ENCODE measurements at regions of chr4 and their contacts with region 1.

Region 1: DNA sequence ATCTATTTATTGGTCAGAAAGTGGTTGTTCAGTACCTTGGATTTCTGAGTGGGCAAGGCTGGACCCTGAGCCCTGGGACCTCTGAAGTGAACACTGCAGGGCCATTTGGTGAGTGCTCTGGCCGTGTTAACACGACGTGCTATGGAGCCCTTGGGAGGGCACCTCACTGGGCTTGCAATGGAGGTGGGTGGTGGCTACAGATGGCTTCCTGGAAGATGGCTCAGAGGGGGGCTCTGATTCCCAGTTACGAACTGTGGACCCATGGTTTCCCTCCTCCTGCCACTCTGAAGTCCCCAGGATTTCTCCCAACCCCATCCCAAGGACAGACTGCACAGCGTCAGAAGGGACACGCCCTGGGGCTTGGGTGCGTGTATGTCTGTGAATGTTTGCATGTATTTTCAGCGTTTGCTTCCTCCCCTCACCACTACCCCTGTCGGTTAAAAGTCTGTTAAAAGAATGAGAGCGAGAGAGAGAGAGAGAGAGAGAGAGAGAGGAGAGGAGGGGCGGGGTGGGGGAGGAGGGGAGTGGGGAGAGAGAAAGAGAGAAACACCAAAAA is 3.7 kb upstream of the RHOH start:
- DNase-seq: peak; percentile 72
- H3K4me3 Mint-ChIP-seq: peak overlapping the region; percentile 93
- H3K27ac Mint-ChIP-seq: peak overlapping the region; percentile 96
- H3K4me1 Mint-ChIP-seq: peaks cover 75% of the 10 kb centered on the region
- H3K27me3 Mint-ChIP-seq: peaks cover 4% of the 10 kb centered on the region

Region 2: DNA sequence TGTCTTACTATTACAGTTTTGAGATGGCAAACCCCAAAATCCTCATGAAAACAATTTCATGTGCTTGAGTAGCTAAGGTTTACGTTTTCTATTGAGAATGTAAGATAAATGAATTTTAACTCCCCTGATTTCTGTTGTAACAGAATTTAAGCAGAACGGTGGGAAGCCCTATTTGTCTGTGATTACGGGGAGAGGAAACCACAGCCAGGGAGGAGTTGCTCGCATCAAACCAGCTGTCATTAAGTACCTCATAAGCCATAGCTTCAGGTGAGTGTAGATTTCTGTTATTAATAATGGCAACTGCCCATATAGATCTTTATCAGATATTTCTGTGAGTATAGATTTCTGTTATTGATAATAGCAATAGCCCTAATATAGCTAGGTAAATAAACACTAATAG is 40.5 kb before region 1 on chr4:
- CTCF ChIA-PET with region 1: interaction called, 11 read pairs
- DNase-seq: peak; percentile 31
- H3K4me3 Mint-ChIP-seq: no peak overlapping the region
- H3K27ac Mint-ChIP-seq: peak overlapping the region; percentile 24
- H3K4me1 Mint-ChIP-seq: peaks cover 36% of the 10 kb centered on the region
- H3K27me3 Mint-ChIP-seq: no peaks in the 10 kb centered on the region

Region 3: DNA sequence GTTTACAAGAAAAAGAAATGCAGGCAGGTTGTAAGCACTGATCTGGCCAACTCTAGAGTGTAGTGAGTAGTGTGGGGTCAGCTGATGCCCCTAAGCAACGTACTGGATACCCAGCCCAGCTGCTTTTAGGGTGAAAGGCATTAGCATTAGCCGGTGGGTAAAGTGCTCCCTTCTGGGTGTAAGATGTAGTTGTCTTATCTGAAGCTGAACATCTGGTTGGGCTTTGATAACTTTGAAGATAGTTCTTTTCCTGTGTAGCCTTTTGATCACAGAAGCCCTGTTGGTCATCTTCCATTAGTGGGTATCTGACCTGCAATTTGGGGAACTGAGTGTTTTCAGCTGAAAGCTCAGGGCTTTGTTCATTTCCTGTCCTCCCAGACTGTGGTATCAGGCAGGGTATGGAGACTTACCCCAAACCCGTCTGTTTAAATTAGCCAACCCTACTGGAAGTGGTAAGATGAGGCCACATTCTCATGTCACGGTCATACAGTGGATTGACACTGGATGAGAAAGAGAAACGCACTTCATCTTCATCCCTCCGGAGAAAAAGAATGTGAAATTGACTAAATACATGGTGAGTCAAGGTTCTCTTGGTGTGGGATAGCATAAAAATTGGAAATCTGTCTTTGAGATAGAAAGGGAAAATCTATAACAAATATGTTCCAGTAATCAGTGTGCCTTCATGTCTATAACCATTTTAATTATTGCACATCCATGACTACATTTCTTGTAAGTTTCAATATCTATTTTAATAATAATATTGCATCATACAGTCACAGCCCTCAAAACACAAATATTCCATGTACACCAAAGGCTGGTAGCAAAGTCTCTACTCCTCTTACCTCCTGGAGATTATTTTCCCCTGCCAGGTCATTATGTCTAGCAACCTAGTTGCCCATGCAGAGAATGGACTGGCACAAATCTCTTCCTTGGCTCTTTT is 12.4 kb after region 1 on chr4:
- CTCF ChIA-PET with region 1: interaction called, 13 read pairs
- DNase-seq: peak; percentile 52
- H3K4me3 Mint-ChIP-seq: peak overlapping the region; percentile 93
- H3K27ac Mint-ChIP-seq: peak overlapping the region; percentile 96
- H3K4me1 Mint-ChIP-seq: peaks cover 69% of the 10 kb centered on the region
- H3K27me3 Mint-ChIP-seq: no peaks in the 10 kb centered on the region

Measured in activated naive CD4-positive, alpha-beta T cell treated with anti-CD3 and anti-CD28 coated beads, Interleukin-2, amount 10 ng/mL, durations not matched to agents 7 days and 5 days (primary cell).